Activated T-helper 2 cell treated with anti-CD3 and anti-CD28 coated beads, Interferon-gamma antibody, Interleukin-2, Interleukin-4, amounts not matched to agents 10 μg/mL and 5 μg/mL and 100 μg/mL, durations not matched to agents 14 hours and 24 hours and 36 hours (primary cell): ENCODE measurements at regions of chr7 and their contacts with region 1.

Region 1: GRCh38 chr7:122305475-122306319 is 1.1 kb upstream of the FEZF1 start:
- DNase-seq: no peak
- H3K4me3 Mint-ChIP-seq: no peak overlapping the region
- H3K27ac Mint-ChIP-seq: no peak overlapping the region
- H3K4me1 Mint-ChIP-seq: no peaks in the 10 kb centered on the region
- H3K27me3 Mint-ChIP-seq: peaks cover 83% of the 10 kb centered on the region

Region 2: DNA sequence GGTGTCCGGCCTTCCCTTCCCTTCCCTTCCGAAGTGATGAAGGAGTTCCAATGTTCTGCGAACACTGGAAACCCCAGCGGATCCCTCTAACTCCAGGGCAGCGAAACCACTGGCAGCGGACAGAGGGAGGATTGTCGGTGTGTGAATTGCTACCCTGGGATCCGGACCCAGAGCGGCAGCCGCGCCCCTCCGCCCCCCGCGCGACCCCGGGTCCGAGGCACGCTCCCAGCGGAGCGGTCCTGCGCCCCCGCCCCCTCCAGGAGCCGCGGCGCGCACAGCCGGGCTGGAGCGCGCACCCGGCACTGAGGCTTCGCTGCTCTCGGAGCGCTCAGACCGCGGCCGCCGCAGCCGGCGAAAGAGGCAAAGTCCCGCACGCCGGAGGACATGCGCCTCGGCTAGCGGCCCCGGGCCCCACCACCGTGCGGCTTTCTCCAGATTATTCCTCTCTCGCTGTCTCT is 432.8 kb before region 1 on chr7 and contains the start of gene PTPRZ1:
- intact Hi-C with region 1: loop called (anchors 10 kb)
- DNase-seq: no peak
- H3K4me3 Mint-ChIP-seq: peak within 1 kb of the TSS; percentile 38
- H3K27ac Mint-ChIP-seq: no peak within 1 kb of the TSS
- H3K4me1 Mint-ChIP-seq: peaks cover 2% of the 10 kb centered on the region
- H3K27me3 Mint-ChIP-seq: peaks cover 43% of the 10 kb centered on the region
- total RNA-seq, gene PTPRZ1: not detected in 2 replicates

Region 3: DNA sequence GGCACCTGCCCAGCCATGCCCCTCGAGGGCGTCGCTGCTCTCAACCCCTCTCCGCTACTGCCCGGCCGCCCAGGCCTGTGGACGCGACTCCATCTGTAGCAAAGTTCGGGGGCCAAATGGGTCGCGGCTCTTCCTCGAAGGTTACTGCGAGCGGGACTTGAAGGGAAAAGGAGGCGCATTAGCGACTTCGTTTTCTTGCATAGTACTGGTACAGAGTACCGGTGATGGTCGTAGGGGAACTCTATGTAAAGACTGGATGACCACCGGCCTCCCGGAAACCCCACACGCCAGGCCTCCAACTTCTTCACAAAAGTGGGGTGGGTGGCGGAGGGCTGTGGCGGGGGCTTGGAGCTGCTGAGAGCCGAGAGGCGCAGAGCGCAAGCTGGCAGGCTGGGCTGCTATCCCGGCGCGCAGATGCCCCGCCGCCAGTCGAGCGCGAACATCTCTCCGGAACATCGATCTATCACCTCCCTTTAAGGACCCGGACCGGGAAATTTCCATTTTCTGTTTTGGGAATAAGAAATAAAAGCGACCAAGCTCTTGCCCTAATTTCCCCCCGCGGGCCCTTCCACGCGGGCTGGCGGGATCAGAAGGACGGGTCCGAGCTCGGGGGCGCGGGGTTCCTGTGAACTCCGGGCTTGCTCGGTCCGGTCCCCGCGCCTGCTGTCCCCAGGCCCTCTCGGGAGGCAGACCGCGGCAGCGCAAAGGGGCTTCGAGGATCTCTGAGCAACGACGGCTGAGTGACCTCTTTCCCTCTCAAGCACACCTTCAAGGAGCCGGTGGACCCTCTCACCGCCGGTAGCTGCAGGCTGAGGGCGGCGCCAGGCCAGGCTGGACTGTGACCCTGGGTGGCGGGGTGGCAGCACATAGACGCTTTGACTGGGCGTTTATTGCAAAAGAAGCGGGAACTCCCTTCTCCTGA is 11.0 kb after region 1 on chr7:
- intact Hi-C with region 1: loop called (anchors 1 kb)
- DNase-seq: no peak
- H3K4me3 Mint-ChIP-seq: no peak overlapping the region
- H3K27ac Mint-ChIP-seq: no peak overlapping the region
- H3K4me1 Mint-ChIP-seq: no peaks in the 10 kb centered on the region
- H3K27me3 Mint-ChIP-seq: peaks cover 58% of the 10 kb centered on the region

Region 4: GRCh38 chr7:122886357-122887081 is 580.8 kb after region 1 on chr7 and contains the start of gene CADPS2:
- intact Hi-C with region 1: loop called (anchors 5 kb)
- DNase-seq: no peak
- H3K4me3 Mint-ChIP-seq: peak within 1 kb of the TSS; percentile 55
- H3K27ac Mint-ChIP-seq: no peak within 1 kb of the TSS
- H3K4me1 Mint-ChIP-seq: peaks cover 9% of the 10 kb centered on the region
- H3K27me3 Mint-ChIP-seq: peaks cover 51% of the 10 kb centered on the region
- total RNA-seq, gene CADPS2: not detected in 2 replicates